ENCODE measurements at regions of chr22 and their contacts with region 1.

Region 1: DNA sequence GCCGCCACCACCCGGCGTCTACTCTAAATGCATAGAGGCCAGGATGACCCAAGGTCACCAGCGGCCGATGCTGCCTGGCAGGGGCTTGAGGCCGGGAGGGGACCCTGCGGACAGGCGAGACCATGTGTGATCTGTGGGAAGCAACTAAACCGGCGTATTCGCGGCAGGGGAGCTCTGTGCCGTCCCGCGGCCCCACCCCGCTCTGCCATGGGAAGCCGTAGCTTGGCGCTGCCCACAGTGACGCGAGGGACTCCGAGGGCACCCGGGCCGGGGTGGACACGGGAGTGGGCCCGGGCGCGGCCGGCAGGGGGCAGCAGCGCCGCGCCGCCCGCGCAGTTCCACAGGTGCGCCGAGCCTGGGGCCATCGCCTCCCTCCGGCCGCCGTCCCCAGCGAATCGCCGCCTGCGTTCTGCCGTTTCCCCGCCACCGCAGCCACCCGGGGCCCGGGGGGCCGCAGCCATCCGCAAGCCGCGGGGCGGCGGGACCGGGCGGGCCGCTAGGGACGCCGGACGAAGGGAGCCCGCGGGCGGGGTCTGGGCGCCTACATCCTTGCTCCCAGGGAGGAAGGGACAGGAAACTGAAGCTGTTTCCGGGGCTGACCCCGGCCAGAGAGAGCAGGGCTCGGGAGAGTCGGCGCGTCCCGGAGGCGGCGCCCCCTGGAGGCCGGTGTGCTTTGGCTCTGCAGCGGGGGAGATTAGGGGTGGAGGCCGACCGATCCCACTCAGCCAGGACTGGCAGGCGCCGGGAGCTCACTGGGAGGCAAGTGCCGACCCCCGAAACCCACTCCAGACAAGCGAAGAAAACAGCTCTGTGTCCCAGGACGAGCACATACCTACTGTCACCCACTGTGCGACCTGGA is 12.5 kb upstream of the HDHD5 start:
- DNase-seq: peak; percentile 80
- H3K4me3 Mint-ChIP-seq: peak overlapping the region; percentile 71
- H3K27ac Mint-ChIP-seq: peak overlapping the region; percentile 36
- H3K4me1 Mint-ChIP-seq: peaks cover 6% of the 10 kb centered on the region
- H3K27me3 Mint-ChIP-seq: peaks cover 9% of the 10 kb centered on the region

Region 2: GRCh38 chr22:17077255-17077654 is 94.3 kb before region 1 on chr22:
- CTCF ChIA-PET with region 1: interaction called, 69 read pairs
- POLR2A ChIA-PET with region 1: interaction called, 16 read pairs
- DNase-seq: no peak
- H3K4me3 Mint-ChIP-seq: no peak overlapping the region
- H3K27ac Mint-ChIP-seq: no peak overlapping the region
- H3K4me1 Mint-ChIP-seq: peaks cover 18% of the 10 kb centered on the region
- H3K27me3 Mint-ChIP-seq: peaks cover 51% of the 10 kb centered on the region

Region 3: DNA sequence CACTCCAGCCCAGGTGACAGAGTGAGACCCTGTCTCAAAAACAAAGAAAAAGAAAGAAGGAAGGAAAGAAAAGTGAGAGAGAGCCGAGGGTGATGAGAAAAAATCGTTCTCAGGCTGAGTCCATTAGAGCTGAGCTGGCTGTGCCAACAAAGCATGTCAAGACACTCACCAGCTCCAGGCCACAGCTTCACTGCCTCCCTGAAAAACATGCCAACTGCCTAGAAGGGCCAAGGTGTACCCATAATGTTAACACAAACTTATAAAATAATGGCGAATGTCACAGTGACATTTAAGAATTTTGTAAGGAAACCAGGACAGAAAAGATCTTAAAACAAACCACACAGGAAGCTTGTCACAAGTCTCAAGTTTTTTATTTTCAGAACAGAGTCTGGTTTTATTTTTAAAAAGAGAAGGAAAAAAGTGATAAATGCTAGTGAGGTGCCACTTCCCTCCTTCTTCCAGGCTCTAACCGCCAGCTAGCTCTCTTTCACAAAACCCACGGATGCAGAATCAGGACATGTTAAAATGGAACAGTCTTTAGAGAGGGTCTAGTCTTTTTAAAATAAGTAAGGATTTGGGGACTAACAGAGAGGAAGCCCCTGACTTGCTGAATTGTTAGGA is 55.5 kb before region 1 on chr22:
- CTCF ChIA-PET with region 1: interaction called, 12 read pairs
- POLR2A ChIA-PET with region 1: interaction called, 3 read pairs
- DNase-seq: no peak
- H3K4me3 Mint-ChIP-seq: no peak overlapping the region
- H3K27ac Mint-ChIP-seq: peak overlapping the region; percentile 38
- H3K4me1 Mint-ChIP-seq: peaks cover 38% of the 10 kb centered on the region
- H3K27me3 Mint-ChIP-seq: peaks cover 10% of the 10 kb centered on the region

Region 4: GRCh38 chr22:17131686-17132085 is 39.9 kb before region 1 on chr22:
- CTCF ChIA-PET with region 1: no interaction called
- POLR2A ChIA-PET with region 1: no interaction called
- DNase-seq: no peak
- H3K4me3 Mint-ChIP-seq: no peak overlapping the region
- H3K27ac Mint-ChIP-seq: no peak overlapping the region
- H3K4me1 Mint-ChIP-seq: no peaks in the 10 kb centered on the region
- H3K27me3 Mint-ChIP-seq: no peaks in the 10 kb centered on the region

Region 5: DNA sequence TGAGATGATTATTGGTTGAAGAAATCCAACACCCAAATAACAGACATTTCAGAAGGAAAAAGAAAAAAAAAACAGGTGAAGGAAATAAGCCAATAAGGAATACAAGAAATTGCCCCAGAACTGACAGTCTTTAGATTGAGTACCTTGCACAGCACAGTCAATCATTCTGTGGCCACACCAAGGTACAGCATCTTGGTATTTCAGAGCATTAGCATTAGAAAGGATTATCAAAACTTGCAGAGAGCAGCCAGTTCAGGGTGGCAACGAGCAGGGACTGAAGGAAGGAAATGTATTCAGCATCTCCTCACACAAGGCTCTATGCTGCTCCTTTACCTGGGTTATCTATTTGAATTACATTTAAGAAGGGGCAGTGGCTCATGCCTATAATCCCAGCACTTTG is 45.6 kb after region 1 on chr22:
- CTCF ChIA-PET with region 1: interaction called, 12 read pairs
- POLR2A ChIA-PET with region 1: interaction called, 17 read pairs
- DNase-seq: peak; percentile 30
- H3K4me3 Mint-ChIP-seq: peak overlapping the region; percentile 65
- H3K27ac Mint-ChIP-seq: peak overlapping the region; percentile 75
- H3K4me1 Mint-ChIP-seq: peaks cover 62% of the 10 kb centered on the region
- H3K27me3 Mint-ChIP-seq: peaks cover 2% of the 10 kb centered on the region

Region 6: DNA sequence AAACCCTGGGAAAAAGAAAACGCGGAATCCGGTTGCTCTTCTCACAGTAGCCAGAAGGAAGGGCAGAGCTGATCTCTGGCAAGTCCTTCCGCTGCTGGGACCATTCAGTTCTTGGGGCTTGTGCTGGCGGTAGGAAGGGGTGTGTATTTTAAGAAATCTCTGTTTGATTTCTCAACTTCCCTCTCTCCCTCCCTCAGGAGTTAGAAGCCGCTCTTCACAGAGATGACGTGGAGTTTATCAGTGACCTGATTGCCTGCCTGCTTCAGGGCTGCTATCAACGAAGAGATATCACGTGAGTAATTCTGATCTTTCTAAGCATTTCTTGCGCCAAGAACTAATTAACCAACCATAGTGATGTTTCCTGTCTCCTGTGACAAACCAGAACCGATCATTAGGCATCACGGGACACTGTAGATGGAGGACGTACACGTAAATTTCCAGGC is 305.9 kb after region 1 on chr22:
- CTCF ChIA-PET with region 1: interaction called, 12 read pairs
- POLR2A ChIA-PET with region 1: no interaction called
- DNase-seq: no peak
- H3K4me3 Mint-ChIP-seq: no peak overlapping the region
- H3K27ac Mint-ChIP-seq: no peak overlapping the region
- H3K4me1 Mint-ChIP-seq: peaks cover 2% of the 10 kb centered on the region
- H3K27me3 Mint-ChIP-seq: peaks cover 27% of the 10 kb centered on the region

Measured in activated CD4-positive, alpha-beta memory T cell treated with anti-CD3 and anti-CD28 coated beads, Interleukin-2, amount 10 ng/mL, durations not matched to agents 7 days and 5 days (primary cell).